ENCODE measurements at regions of chr11 and their contacts with region 1.

Region 1: GRCh38 chr11:128757235-128757711 is 63.4 kb downstream of the FLI1 start:
- DNase-seq: peak; percentile 84
- H3K4me3 Mint-ChIP-seq: peak overlapping the region; percentile 42
- H3K27ac Mint-ChIP-seq: peak overlapping the region; percentile 89
- H3K4me1 Mint-ChIP-seq: peaks cover 81% of the 10 kb centered on the region
- H3K27me3 Mint-ChIP-seq: no peaks in the 10 kb centered on the region

Region 2: DNA sequence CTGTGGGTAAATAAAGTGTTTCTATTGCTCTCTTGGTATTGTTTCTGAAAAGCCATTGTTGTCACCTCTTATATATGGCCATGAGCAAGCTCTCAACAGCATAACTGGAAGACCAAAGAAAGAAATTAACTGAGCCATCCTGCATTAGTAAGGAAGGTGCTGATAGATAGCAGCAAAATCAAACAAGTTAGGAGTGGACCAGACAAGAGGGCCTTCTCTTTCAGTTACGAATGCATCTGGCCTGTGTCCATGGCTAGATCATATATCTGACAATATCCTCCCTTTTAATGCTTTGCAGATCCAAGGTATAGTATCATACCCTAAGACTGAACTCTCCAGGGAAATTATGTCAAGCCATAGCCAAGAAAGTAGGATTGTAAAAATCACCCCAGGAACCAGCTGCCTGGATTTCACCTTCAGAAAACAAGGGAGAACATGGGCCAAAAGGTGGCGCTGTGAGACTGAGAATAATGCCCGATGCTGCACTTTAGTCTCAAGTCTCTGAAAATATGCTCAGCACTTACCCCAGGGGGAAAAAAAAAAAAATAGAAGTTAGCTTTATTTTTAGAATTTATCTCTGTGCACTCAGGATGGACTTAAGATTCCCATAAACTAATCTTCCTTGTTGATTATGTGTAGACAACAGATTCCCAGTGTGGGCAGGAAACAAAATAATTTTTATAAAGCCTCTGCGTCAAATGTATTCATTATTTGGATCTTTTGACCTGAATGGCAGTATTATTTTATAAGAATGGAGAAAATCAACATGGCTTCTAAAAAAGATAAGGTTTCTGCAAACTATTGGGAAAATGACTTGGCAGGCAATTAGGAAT is 585.0 kb before region 1 on chr11:
- CTCF ChIA-PET with region 1: interaction called, 16 read pairs
- POLR2A ChIA-PET with region 1: no interaction called
- intact Hi-C with region 1: loop called (anchors 2 kb)
- DNase-seq: peak; percentile 91
- H3K4me3 Mint-ChIP-seq: no peak overlapping the region
- H3K27ac Mint-ChIP-seq: peak overlapping the region; percentile 25
- H3K4me1 Mint-ChIP-seq: peaks cover 17% of the 10 kb centered on the region
- H3K27me3 Mint-ChIP-seq: no peaks in the 10 kb centered on the region

Region 3: DNA sequence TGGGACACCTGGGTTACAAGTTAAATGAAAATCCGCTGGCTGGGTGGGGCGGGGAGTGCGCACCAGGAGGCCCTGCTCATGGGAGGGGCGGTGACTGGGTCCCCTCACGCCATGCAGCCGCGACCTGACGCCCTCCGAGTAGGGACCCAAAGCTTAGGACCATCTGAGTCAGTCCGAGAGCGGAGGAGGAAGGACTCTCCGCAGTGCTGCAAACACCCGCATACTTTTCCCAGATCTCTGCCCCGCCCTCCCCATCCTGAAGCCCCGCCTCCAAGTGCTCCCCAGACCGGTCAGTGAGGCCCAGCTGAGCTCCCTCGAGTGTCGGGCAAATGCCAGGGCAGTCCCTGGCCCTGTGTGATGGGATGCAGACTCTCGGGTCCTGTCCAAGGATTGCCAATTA is 70.0 kb before region 1 on chr11:
- CTCF ChIA-PET with region 1: interaction called, 11 read pairs
- POLR2A ChIA-PET with region 1: no interaction called
- intact Hi-C with region 1: no loop called
- DNase-seq: no peak
- H3K4me3 Mint-ChIP-seq: peak overlapping the region; percentile 71
- H3K27ac Mint-ChIP-seq: no peak overlapping the region
- H3K4me1 Mint-ChIP-seq: peaks cover 35% of the 10 kb centered on the region
- H3K27me3 Mint-ChIP-seq: peaks cover 39% of the 10 kb centered on the region

Region 4: DNA sequence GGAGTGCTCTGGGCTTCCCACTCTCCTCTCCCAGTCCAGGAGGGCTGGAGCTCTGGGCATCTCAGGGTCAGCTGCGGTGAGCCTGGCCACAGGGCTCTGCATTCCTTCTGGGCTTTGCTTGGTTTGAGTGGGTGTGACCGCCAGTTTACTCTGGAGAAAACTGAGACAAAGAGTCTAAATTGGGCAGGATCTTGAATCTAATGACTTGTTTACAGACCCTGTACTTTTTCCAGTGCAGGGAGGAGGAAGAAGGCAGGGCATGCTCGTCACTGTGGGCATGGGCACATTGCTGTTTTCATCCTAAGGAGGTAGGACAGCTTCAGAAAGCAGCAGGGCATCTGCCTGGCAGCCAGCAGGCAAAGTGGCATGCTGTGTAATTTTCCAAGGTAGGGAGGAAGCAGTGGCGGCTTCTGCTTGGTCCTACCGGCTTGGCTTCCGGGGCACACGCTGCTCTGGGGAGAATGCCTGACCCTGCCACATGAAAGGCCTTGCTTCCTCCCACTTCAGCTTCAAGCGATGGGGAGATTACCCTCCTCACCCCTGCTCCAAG is 40.5 kb before region 1 on chr11:
- CTCF ChIA-PET with region 1: interaction called, 12 read pairs
- POLR2A ChIA-PET with region 1: no interaction called
- intact Hi-C with region 1: loop called (anchors 5 kb)
- DNase-seq: peak; percentile 72
- H3K4me3 Mint-ChIP-seq: peak overlapping the region; percentile 63
- H3K27ac Mint-ChIP-seq: peak overlapping the region; percentile 97
- H3K4me1 Mint-ChIP-seq: peaks cover 97% of the 10 kb centered on the region
- H3K27me3 Mint-ChIP-seq: no peaks in the 10 kb centered on the region

Region 5: DNA sequence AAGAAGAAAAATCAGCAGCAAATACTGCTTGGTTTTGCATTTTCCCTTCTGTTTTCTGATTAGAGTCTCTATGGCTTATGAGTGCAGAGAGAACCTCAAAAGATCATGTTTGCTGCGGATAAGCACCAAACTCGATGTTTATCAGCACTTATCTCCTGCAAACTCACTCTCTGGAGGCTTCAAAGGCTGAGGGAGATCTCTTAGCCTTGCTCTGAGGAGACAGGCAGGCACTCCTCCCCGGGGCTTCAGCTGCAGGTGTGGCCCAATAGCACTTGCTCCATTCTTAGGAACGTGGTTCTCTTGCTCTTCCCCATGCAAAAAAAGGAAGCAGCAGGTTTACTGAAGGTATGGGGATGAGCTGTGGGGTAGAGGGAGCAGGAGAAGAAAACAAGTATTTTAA is 18.3 kb before region 1 on chr11:
- CTCF ChIA-PET with region 1: interaction called, 14 read pairs
- POLR2A ChIA-PET with region 1: interaction called, 7 read pairs
- intact Hi-C with region 1: loop called (anchors 1 kb)
- DNase-seq: no peak
- H3K4me3 Mint-ChIP-seq: peak overlapping the region; percentile 44
- H3K27ac Mint-ChIP-seq: peak overlapping the region; percentile 72
- H3K4me1 Mint-ChIP-seq: peaks cover 80% of the 10 kb centered on the region
- H3K27me3 Mint-ChIP-seq: no peaks in the 10 kb centered on the region

Region 6: GRCh38 chr11:128831174-128832120 is 74.2 kb after region 1 on chr11:
- CTCF ChIA-PET with region 1: interaction called, 20 read pairs
- POLR2A ChIA-PET with region 1: no interaction called
- intact Hi-C with region 1: loop called (anchors 2 kb)
- DNase-seq: peak; percentile 93
- H3K4me3 Mint-ChIP-seq: peak overlapping the region; percentile 30
- H3K27ac Mint-ChIP-seq: peak overlapping the region; percentile 89
- H3K4me1 Mint-ChIP-seq: peaks cover 19% of the 10 kb centered on the region
- H3K27me3 Mint-ChIP-seq: no peaks in the 10 kb centered on the region

Region 7: DNA sequence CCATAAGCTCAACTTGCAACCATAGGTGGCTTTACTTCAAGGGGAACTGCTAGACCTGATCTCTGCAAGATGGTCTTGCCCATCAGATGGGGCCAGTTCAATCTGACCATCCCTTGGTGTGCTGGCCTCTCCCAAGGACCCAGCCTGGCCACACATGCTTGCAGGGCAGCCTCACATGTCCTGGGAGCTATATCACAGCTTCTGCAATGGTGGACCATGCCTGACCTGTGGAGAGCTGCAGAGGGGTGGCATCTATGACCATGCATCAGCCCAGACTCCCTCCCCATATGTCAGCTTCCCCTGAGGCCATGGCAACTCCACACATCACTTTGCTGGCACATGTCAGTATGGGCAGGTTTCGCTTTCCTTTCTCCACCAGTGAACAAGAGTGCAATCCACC is 342.9 kb after region 1 on chr11:
- CTCF ChIA-PET with region 1: no interaction called
- POLR2A ChIA-PET with region 1: no interaction called
- intact Hi-C with region 1: no loop called
- DNase-seq: no peak
- H3K4me3 Mint-ChIP-seq: no peak overlapping the region
- H3K27ac Mint-ChIP-seq: no peak overlapping the region
- H3K4me1 Mint-ChIP-seq: no peaks in the 10 kb centered on the region
- H3K27me3 Mint-ChIP-seq: peaks cover 1% of the 10 kb centered on the region

Measured in activated CD4-positive, alpha-beta memory T cell treated with anti-CD3 and anti-CD28 coated beads for 36 hours (primary cell).